Activated B cell treated with CpG ODN at 0.5 μM for 24 hours (primary cell): ENCODE measurements at regions of chr10 and their contacts with region 1.

Region 1: DNA sequence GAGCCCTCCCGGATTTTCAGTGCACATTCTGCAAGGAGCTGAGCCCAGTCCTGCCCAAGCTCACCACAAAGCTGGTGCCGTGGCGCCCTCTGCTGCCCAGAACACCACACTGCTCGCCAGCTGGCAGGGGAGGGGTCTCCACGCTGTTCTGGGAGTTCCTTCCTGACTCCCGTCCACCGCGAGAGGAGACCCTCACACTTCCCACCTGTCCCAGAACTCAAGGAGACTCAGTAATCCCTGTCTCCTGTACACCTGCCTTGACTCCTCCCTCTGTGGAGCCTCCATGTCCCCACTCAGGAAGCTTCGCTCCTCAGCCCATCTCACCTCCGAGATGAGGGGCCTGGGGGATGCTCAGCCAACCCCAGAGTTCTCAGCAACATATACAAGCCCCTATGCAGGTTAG is 11.3 kb downstream of the C10orf105 start:
- DNase-seq: peak; percentile 71
- ATAC-seq: peak; percentile 84
- H3K4me3 Mint-ChIP-seq: no peak overlapping the region
- H3K27ac Mint-ChIP-seq: no peak overlapping the region
- H3K4me1 Mint-ChIP-seq: peaks cover 22% of the 10 kb centered on the region
- H3K27me3 Mint-ChIP-seq: no peaks in the 10 kb centered on the region
- CTCF ChIP-seq: peak; percentile 33

Region 2: DNA sequence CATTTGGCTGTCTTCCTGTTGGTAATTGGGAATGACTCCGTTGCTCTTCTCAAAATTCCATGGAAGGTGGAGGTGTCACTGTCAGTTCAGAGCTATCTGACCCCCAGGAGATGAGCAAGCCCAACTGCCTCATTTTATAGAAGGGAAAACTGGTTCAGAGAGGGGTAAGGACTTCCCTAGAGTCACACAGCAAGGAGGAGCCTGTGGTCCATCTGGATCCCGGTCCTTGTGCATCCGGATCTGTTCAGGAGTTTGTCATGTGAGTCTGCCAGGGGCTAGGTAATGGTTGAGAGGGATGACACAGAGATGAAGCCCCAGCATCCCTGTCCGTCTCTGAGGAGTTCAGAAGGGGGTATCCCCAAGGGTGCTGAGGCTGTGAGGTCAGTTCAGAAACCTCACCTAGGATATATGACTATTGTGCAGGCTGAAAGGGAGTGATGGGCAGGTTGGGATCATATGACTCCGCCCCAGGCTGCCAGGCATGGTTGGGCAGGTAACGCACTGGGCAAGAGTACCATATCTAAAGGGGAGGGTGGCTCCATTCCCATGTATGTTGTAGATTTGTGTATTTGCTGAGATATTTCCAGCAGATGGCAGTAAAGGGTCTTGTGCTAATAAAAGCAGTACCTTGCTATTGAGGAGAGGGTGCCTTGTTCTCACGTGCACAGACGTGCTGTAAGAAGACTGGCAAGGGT is 405.3 kb before region 1 on chr10:
- CTCF ChIA-PET with region 1: no interaction called
- POLR2A ChIA-PET with region 1: no interaction called
- intact Hi-C with region 1: loop called (anchors 1 kb)
- DNase-seq: no peak
- ATAC-seq: peak; percentile 81
- H3K4me3 Mint-ChIP-seq: no peak overlapping the region
- H3K27ac Mint-ChIP-seq: no peak overlapping the region
- H3K4me1 Mint-ChIP-seq: peaks cover 4% of the 10 kb centered on the region
- H3K27me3 Mint-ChIP-seq: peaks cover 3% of the 10 kb centered on the region
- CTCF ChIP-seq: no peak

Region 3: DNA sequence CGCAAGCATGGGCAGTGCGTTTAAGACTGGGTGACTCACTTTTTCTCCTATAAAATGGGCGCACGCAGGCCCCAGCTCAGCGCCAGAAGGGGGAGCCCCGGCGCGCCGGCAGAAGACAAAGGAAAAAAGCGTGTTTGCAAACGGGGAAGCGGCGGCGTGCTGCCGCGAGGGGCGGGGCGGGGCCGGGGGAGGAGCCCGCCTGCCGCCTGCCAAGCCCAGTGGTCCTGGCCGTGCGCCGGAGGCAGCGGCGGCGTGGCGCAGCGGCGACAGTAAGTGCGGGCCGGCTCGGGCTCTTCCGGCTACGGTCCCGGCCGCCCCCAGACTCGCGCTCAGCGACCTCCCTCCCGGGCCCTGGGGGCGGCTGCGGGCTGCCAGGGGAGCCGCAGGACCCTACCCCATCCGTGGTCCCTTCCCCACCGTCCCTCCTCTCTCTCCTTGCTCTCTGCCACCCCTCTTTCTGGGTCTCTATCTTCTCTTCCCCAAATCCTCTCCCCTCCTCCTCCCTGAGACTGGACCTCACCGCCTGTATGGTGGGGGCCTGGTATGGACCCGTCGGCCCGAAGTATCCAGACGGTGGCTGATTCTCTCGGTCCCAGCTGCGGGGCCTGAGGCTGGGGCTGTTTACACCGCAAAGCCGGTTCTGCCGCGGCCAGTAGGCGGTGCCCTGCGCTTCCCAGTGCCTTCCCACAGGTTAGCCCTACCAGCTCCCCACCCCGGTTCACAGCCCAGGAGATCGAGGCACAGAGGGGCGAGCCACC is 389.1 kb before region 1 on chr10 and contains the start of gene SLC29A3:
- CTCF ChIA-PET with region 1: interaction called, 46 read pairs
- POLR2A ChIA-PET with region 1: interaction called, 5 read pairs
- intact Hi-C with region 1: loop called (anchors 1 kb)
- DNase-seq: peak; percentile 72
- ATAC-seq: peak; percentile 90
- H3K4me3 Mint-ChIP-seq: peak within 1 kb of the TSS; percentile 96
- H3K27ac Mint-ChIP-seq: peak within 1 kb of the TSS; percentile 80
- H3K4me1 Mint-ChIP-seq: peaks cover 13% of the 10 kb centered on the region
- H3K27me3 Mint-ChIP-seq: no peaks in the 10 kb centered on the region
- CTCF ChIP-seq: no peak
- total RNA-seq, gene SLC29A3: 3.1 and 4.3 TPM in 2 replicates

Region 4: GRCh38 chr10:71396084-71396720 is 312.1 kb before region 1 on chr10:
- CTCF ChIA-PET with region 1: interaction called, 13 read pairs
- POLR2A ChIA-PET with region 1: no interaction called
- intact Hi-C with region 1: no loop called
- DNase-seq: peak; percentile 54
- ATAC-seq: peak; percentile 71
- H3K4me3 Mint-ChIP-seq: peak overlapping the region; percentile 78
- H3K27ac Mint-ChIP-seq: no peak overlapping the region
- H3K4me1 Mint-ChIP-seq: peaks cover 8% of the 10 kb centered on the region
- H3K27me3 Mint-ChIP-seq: peaks cover 52% of the 10 kb centered on the region
- CTCF ChIP-seq: no peak

Region 5: GRCh38 chr10:71665456-71665855 is 42.8 kb before region 1 on chr10:
- CTCF ChIA-PET with region 1: interaction called, 8 read pairs
- POLR2A ChIA-PET with region 1: no interaction called
- intact Hi-C with region 1: loop called (anchors 1 kb)
- DNase-seq: no peak
- ATAC-seq: no peak
- H3K4me3 Mint-ChIP-seq: no peak overlapping the region
- H3K27ac Mint-ChIP-seq: peak overlapping the region; percentile 30
- H3K4me1 Mint-ChIP-seq: peaks cover 17% of the 10 kb centered on the region
- H3K27me3 Mint-ChIP-seq: no peaks in the 10 kb centered on the region
- CTCF ChIP-seq: no peak

Region 6: GRCh38 chr10:71745657-71746250 is 37.5 kb after region 1 on chr10:
- CTCF ChIA-PET with region 1: no interaction called
- POLR2A ChIA-PET with region 1: no interaction called
- intact Hi-C with region 1: no loop called
- DNase-seq: no peak
- ATAC-seq: no peak
- H3K4me3 Mint-ChIP-seq: no peak overlapping the region
- H3K27ac Mint-ChIP-seq: peak overlapping the region; percentile 9
- H3K4me1 Mint-ChIP-seq: peaks cover 75% of the 10 kb centered on the region
- H3K27me3 Mint-ChIP-seq: no peaks in the 10 kb centered on the region
- CTCF ChIP-seq: no peak

Region 7: GRCh38 chr10:72593963-72594362 is 885.7 kb after region 1 on chr10:
- CTCF ChIA-PET with region 1: no interaction called
- POLR2A ChIA-PET with region 1: no interaction called
- intact Hi-C with region 1: no loop called
- DNase-seq: no peak
- ATAC-seq: no peak
- H3K4me3 Mint-ChIP-seq: no peak overlapping the region
- H3K27ac Mint-ChIP-seq: no peak overlapping the region
- H3K4me1 Mint-ChIP-seq: peaks cover 27% of the 10 kb centered on the region
- H3K27me3 Mint-ChIP-seq: no peaks in the 10 kb centered on the region
- CTCF ChIP-seq: no peak